ENCODE measurements at regions of chr10 and their contacts with region 1.

Region 1: GRCh38 chr10:110918643-110919363 is at the start of gene BBIP1:
- DNase-seq: peak; percentile 92 to 99
- ATAC-seq: peak; percentile 86 to 96
- H3K4me3 ChIP-seq: peak within 1 kb of the TSS; percentile 78
- H3K27ac ChIP-seq: peak within 1 kb of the TSS; percentile 95 to 98
- H3K4me1 ChIP-seq: peaks cover 50% of the 10 kb centered on the region
- CTCF ChIP-seq: no peak
- EP300 ChIP-seq: no peak
- POLR2A ChIP-seq: peak; percentile 59
- RAD21 ChIP-seq: no peak
- polyA plus RNA-seq, gene BBIP1: 73.5 and 83.4 TPM in 2 replicates

Region 2: GRCh38 chr10:110304780-110305421 is 613.9 kb before region 1 on chr10 and contains the start of gene SMNDC1:
- CTCF ChIA-PET with region 1: no interaction called
- POLR2A ChIA-PET with region 1: interaction called, 11 read pairs
- DNase-seq: peak; percentile 86 to 99
- ATAC-seq: peak; percentile 91 to 95
- H3K4me3 ChIP-seq: peak within 1 kb of the TSS; percentile 93
- H3K27ac ChIP-seq: peak within 1 kb of the TSS; percentile 97 to 98
- H3K4me1 ChIP-seq: peaks cover 57% of the 10 kb centered on the region
- CTCF ChIP-seq: no peak
- EP300 ChIP-seq: no peak
- POLR2A ChIP-seq: peak; percentile 28; the same call in 1 of the 2 replicates
- RAD21 ChIP-seq: no peak; a peak in 1 of 5 replicates
- polyA plus RNA-seq, gene SMNDC1: 35.4 and 40.2 TPM in 2 replicates

Region 3: GRCh38 chr10:110803830-110804338 is 114.9 kb before region 1 on chr10:
- CTCF ChIA-PET with region 1: no interaction called
- POLR2A ChIA-PET with region 1: interaction called, 15 read pairs
- DNase-seq: peak; percentile 49 to 50
- ATAC-seq: peak; percentile 84 to 95
- H3K4me3 ChIP-seq: no peak overlapping the region
- H3K27ac ChIP-seq: peak overlapping the region in 1 of 2 experiments; percentile 47; a peak in 1 of 6 replicates
- H3K4me1 ChIP-seq: peaks cover 9% of the 10 kb centered on the region; the same call in 1 of the 3 replicates
- CTCF ChIP-seq: peak; percentile 57
- EP300 ChIP-seq: no peak
- POLR2A ChIP-seq: no peak
- RAD21 ChIP-seq: peak; percentile 67 to 75

Region 4: DNA sequence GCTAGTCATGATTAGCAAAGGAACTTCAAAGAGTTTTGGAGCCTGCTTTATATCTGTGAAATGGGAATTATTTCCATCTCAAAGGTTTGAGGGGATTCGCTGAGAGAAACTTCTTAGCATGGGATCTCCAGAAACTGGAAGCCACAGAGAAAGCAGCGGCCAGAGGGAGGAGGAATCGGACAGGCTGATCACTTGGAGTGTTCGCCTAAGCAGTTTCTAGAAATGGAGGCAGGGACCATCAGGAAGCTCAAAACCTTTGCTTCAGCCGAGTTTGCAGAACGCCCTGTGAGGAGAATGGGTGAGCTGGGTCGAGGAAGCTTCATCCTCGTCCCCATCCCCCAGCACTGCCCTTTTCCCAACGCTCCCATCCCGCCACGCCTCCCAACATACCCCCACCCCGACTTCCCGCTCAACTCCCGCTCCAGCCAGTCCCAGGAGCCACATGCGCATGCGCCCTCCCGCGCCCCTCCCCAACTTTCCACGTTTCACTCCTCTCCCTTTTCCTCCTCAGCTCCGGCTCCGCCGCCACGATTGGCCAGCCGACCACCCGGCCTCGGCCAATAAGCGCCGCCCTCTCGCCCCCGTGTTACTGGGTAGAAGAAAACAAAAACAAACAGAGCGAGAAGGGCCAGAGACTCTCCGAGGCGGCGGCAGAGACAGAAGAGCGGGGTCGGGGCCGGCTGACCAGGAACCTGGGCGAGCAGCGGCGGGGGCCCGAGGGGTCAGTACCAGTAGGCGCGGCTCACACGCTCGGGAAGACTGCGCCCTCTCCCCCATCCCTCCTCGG is 47.3 kb before region 1 on chr10 and contains the start of gene PDCD4:
- CTCF ChIA-PET with region 1: interaction called, 3 read pairs
- POLR2A ChIA-PET with region 1: interaction called, 18 read pairs
- DNase-seq: peak; percentile 80 to 98
- ATAC-seq: peak; percentile 87 to 95
- H3K4me3 ChIP-seq: peak within 1 kb of the TSS; percentile 78
- H3K27ac ChIP-seq: peak within 1 kb of the TSS; percentile 89 to 95
- H3K4me1 ChIP-seq: peaks cover 36% of the 10 kb centered on the region
- CTCF ChIP-seq: no peak
- EP300 ChIP-seq: no peak
- POLR2A ChIP-seq: peak; percentile 65
- RAD21 ChIP-seq: no peak
- polyA plus RNA-seq, gene PDCD4: 41.9 and 71.4 TPM in 2 replicates

Region 5: GRCh38 chr10:110901954-110902819 is 16.6 kb before region 1 on chr10:
- CTCF ChIA-PET with region 1: interaction called, 8 read pairs
- POLR2A ChIA-PET with region 1: interaction called, 20 read pairs
- DNase-seq: peak; percentile 28 to 47
- ATAC-seq: peak; percentile 72 to 89
- H3K4me3 ChIP-seq: no peak overlapping the region
- H3K27ac ChIP-seq: peak overlapping the region; percentile 64 to 78
- H3K4me1 ChIP-seq: peaks cover 25% of the 10 kb centered on the region
- CTCF ChIP-seq: no peak
- EP300 ChIP-seq: no peak
- POLR2A ChIP-seq: no peak
- RAD21 ChIP-seq: no peak

Region 6: DNA sequence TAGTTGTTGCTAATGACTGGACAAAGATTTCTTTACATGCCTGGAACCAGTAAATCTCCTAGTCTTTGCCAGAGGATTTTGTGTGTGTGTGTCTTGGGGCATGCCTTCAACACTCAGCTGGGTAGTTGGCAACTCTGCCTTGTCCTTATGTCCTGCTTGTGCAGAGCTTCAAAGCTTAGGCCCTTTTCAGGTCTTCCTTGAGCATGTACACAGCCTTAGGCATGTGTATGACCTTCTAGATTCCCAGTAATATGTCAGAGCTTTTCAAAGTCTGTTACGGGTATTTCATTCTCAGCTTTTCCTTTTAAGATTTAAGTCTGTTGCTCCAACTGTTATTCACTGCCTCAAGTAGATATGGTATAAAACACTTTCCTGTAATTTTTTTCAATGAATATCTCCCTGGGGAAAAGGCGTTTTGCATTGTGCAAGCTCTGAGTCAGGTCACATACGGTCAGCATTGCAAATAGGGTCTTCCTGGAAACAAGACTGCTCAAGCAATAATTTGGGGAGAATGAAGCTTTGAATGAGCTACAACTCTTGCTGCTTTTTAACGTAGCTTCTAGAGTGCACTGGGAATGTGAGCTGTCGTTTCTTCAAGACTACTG is 26.1 kb after region 1 on chr10:
- CTCF ChIA-PET with region 1: no interaction called
- POLR2A ChIA-PET with region 1: interaction called, 11 read pairs
- DNase-seq: no peak
- ATAC-seq: no peak
- H3K4me3 ChIP-seq: no peak overlapping the region
- H3K27ac ChIP-seq: no peak overlapping the region
- H3K4me1 ChIP-seq: no peaks in the 10 kb centered on the region
- CTCF ChIP-seq: no peak
- EP300 ChIP-seq: no peak
- POLR2A ChIP-seq: no peak
- RAD21 ChIP-seq: no peak

Measured in A549 (cell line).